ENCODE measurements at regions of chr12 and their contacts with region 1.

Region 1: DNA sequence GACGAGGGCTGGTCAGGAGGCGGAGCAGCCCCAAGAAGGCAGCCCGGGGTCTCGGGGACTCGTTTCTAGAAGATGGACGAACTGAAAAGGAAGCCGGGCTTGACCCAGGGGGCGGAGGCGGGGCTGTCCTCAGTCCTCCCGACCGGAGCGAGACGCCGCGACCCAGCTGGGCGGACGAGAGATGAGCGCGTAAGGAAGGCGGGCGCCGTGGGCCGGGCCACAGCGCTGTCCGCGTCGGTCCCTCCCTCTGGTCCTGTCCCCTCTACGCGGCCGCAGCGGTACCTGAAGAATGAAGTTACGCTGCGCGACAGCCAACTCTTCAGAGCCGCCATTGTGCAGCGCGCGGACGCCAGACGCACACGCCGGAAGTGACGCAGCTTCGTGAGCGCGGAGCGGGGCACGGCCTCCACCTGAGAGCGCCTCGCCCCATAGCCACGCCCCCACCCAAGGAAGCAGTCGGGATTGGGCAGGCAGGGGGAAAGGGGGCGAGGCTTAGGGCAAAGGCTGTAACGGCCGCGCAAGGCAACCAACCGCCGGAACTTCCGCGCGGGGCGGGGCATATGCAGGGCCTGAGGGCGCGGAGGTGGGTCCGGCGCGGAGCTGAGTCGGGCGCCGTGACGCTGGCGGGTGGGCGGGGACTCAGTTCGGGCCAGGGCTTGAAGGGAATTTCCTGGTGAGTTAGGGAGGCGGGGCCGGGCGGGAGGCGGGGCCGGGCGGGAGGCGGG is at the start of gene DIABLO:
- DNase-seq: peak; percentile 99 to 100 (median 100)
- H3K4me3 ChIP-seq: peak within 1 kb of the TSS; percentile 62 to 100 (median 95)
- H3K27ac ChIP-seq: peak within 1 kb of the TSS in 58 of 59 donors; percentile 32 to 97 (median 88)
- H3K27me3 ChIP-seq: no peaks in the 10 kb centered on the region
- CTCF ChIP-seq: peak in 14 of 56 donors; percentile 3 to 40 (median 20)
- total RNA-seq, gene DIABLO: 26.7 to 52.0 (median 41.8) TPM

Region 2: DNA sequence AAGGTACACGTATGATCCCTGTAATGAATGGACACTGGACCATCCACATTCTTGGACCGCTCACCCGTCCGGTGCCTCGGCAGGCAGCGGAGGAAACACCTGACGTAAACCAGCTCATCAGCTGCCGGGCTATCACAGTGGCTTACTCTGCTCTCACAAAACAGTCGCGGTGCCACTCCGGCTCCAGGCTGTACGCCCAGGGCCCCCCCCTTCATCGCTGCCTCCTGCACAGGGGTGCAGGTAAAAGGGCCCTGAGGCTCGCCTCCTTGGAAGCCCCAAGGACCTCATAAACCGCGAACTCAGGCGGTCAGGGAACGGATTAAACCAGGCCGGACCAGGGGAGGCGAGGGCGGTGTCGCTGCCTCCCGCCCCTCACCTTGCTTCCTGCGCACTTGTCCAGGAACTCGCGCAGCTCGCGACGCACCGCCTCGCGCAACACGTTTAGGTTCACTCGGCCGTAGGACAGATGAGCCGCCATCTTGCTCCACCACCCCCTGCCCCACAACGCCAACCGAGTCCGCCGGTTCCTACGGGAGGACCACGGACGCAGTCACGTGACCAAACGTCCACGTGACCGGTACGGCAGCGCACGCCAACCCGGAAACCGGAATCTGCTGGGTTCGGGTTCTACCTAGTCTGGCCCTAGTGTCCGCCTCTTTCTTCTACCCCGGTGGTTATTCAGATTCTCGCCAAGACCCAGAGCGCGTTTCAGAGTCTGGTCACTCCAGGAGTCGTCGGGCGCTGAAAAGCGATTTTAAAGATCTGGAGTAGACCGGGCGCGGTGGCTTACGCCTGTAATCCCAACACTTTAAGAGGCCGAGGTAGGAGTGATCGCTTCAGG is 40.3 kb after region 1 on chr12 and contains the start of gene VPS33A:
- intact Hi-C with region 1: loop called (anchors 2 kb)
- DNase-seq: peak; percentile 94 to 98 (median 96)
- H3K4me3 ChIP-seq: peak within 1 kb of the TSS; percentile 66 to 100 (median 92)
- H3K27ac ChIP-seq: peak within 1 kb of the TSS; percentile 36 to 98 (median 91)
- H3K27me3 ChIP-seq: no peaks in the 10 kb centered on the region
- CTCF ChIP-seq: peak in 34 of 56 donors; percentile 6 to 56 (median 24)
- total RNA-seq, gene VPS33A: 17.9 to 38.0 (median 28.0) TPM

Region 3: DNA sequence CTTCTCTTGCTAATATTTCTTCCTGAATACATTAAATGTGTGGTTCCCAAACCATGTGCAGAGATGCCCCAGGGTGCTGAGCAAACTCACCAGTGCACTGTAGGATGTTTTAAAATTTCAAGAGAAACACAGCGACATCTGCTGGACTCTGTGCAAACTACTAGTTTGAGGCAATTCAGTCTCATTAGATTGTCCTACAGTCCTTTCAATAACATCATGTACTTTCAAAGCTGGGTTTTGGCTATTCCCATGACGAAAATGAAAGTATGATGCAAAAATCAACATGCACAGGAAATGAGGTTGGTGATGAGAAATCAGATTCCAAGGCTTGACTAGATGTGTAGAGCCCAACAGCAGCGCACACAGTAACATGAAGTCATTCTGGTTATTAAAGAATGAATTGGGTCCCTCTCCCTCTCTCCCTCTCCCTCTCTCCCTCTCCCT is 130.4 kb after region 1 on chr12:
- intact Hi-C with region 1: loop called in 1 of 2 experiments (anchors 10 kb)
- DNase-seq: peak in 4 of 10 donors; percentile 23 to 75 (median 44)
- H3K4me3 ChIP-seq: no peak overlapping the region
- H3K27ac ChIP-seq: peak overlapping the region in 37 of 59 donors; percentile 11 to 85 (median 61)
- H3K27me3 ChIP-seq: no peaks in the 10 kb centered on the region
- CTCF ChIP-seq: peak; percentile 64 to 90 (median 81)

Region 4: GRCh38 chr12:122500685-122501488 is 275.0 kb after region 1 on chr12 and contains the start of gene ZCCHC8:
- intact Hi-C with region 1: loop called in 1 of 2 experiments (anchors 10 kb)
- DNase-seq: peak; percentile 92 to 98 (median 97)
- H3K4me3 ChIP-seq: peak within 1 kb of the TSS; percentile 53 to 97 (median 90)
- H3K27ac ChIP-seq: peak within 1 kb of the TSS; percentile 81 to 99 (median 97)
- H3K27me3 ChIP-seq: no peaks in the 10 kb centered on the region
- CTCF ChIP-seq: peak in 40 of 56 donors; percentile 6 to 60 (median 32)
- total RNA-seq, gene ZCCHC8: 13.4 to 37.0 (median 23.0) TPM

Measured in dorsolateral prefrontal cortex (tissue), 120 donors.